ENCODE measurements at regions of chr5 and their contacts with region 1.

Region 1: DNA sequence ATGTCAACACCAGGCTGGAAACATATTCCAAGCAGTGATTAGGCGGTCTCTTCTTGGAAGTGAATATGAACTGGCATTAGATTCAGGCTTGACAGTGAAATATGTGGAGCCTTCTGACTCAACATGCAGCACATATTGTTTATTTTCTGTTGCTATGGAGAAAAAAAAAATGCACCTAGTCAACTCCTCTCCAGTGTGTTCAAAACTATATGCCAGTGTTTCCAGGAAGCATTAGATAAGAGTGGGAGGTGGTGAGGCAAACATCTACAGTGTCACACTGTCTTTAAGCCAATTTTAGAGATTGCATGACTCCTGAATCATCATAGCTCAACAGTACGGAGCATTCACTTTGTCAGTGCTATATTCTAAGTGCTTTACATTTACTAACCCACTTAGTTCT is 117.9 kb downstream of the HCN1 start:
- DNase-seq: peak in 1 of 2 experiments; percentile 49
- H3K4me3 ChIP-seq: no peak overlapping the region
- H3K27ac ChIP-seq: no peak overlapping the region
- H3K4me1 ChIP-seq: no peaks in the 10 kb centered on the region
- H3K27me3 ChIP-seq: no peaks in the 10 kb centered on the region
- CTCF ChIP-seq: no peak

Region 2: GRCh38 chr5:44536650-44537260 is 1041.5 kb before region 1 on chr5:
- CTCF ChIA-PET with region 1: interaction called, 12 read pairs
- POLR2A ChIA-PET with region 1: no interaction called
- intact Hi-C with region 1: no loop called
- DNase-seq: peak in 1 of 2 experiments; percentile 41
- H3K4me3 ChIP-seq: no peak overlapping the region
- H3K27ac ChIP-seq: no peak overlapping the region
- H3K4me1 ChIP-seq: no peaks in the 10 kb centered on the region
- H3K27me3 ChIP-seq: no peaks in the 10 kb centered on the region
- CTCF ChIP-seq: peak; percentile 94